Transverse colon (tissue), 4 donors: ENCODE measurements at regions of chr7 and their contacts with region 1.

Region 1: GRCh38 chr7:100908512-100908911 is 12.8 kb upstream of the ACHE start:
- DNase-seq: no peak
- H3K4me3 ChIP-seq: no peak overlapping the region
- H3K27ac ChIP-seq: no peak overlapping the region
- H3K4me1 ChIP-seq: peaks cover 0 to 18% (median 5%) of the 10 kb centered on the region in 4 donors
- H3K27me3 ChIP-seq: no peaks in the 10 kb centered on the region
- CTCF ChIP-seq: no peak
- EP300 ChIP-seq: no peak
- POLR2A ChIP-seq: no peak

Region 2: DNA sequence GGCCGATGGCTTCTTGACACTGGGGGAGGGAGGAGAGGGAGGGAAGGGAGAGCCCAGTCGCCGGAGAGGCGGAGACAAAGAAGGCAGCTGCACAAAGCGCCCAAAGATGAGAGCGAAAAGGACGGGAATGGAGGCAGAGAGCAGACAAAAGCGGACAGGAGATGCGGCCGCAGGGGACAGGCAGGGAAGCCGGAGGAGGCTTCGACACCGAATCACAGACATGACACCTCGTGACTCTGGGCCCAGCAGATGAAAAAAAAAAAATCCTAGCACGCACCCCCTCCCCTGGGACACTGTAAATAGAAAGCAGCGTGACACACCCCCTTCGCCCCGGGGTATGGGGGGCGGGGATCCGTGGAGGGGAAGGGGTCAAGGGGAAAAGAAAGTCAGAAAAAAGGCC is 270.6 kb after region 1 on chr7:
- in situ Hi-C with region 1: no loop called
- intact Hi-C with region 1: loop called (anchors 5 kb)
- DNase-seq: no peak
- H3K4me3 ChIP-seq: no peak overlapping the region
- H3K27ac ChIP-seq: no peak overlapping the region
- H3K4me1 ChIP-seq: peaks cover 5 to 17% (median 13%) of the 10 kb centered on the region in 4 donors
- H3K27me3 ChIP-seq: peaks cover 87% of the 10 kb centered on the region
- CTCF ChIP-seq: no peak
- EP300 ChIP-seq: no peak
- POLR2A ChIP-seq: no peak